ENCODE measurements at regions of chr1 and their contacts with region 1.

Region 1: DNA sequence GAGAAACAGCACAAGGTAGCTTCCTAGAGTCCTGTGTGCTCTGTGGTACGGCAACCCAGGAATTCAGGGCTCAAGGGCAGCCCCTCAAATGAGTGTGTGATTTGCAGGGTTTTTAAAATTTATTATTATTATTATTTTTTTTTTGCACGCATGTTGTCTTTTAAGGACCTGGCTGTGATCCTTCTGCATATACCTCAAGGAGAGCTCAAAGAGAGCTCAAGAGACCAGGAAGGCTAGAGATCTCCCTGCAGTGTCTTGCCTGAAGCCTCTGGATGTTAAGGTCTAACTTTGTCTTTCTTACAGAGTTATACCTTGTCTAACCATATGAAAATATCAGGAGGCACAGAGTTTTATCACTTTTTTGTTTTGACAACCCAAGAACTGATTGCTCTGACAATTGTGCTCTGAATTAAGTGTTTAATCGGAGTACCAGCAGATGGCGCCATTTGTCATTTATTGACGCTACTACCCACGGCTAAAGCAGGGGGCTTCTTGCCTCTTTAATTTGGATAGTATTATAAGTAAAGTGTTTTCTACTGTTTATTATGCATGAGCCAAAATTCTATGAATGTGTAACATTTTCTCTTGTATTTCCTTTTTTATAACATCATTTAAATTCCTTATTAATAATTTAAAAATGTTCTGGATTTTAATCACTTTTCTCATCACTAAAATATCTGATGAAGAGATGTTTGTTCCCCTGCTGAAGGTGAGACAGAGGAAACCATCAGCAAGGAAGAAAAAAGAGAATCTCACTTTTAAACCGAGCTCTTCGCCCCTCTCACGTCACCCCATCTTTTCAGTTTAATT is 35.8 kb upstream of the LMO4 start:
- DNase-seq: peak; percentile 12
- H3K4me3 Mint-ChIP-seq: no peak overlapping the region
- H3K27ac Mint-ChIP-seq: no peak overlapping the region
- H3K4me1 Mint-ChIP-seq: no peaks in the 10 kb centered on the region
- H3K27me3 Mint-ChIP-seq: peaks cover 11% of the 10 kb centered on the region

Region 2: DNA sequence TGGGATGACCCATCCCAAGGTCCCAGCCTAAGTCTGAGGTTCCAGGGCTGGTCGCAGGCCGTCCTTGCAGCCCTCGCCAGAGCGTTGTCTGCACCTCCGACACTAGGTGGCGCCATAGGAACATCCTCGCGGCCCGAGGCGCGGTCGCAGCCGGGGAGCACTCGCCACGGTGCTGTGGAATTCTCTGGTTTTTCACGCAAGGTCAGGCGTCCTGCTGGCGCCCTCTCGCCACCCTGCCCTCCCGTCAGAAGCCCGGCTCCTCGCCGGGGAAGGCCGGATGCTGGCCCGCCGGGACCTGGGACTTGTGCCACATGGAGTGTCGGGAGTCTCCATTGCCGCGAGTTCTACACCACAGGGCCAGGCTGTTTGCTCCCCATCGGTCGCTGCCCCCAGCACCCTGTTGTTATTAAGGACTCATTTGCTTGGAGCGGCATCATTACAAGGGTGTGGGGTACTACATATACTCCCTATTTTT is 161.0 kb before region 1 on chr1:
- intact Hi-C with region 1: loop called (anchors 1 kb)
- DNase-seq: peak; percentile 59
- H3K4me3 Mint-ChIP-seq: peak overlapping the region; percentile 76
- H3K27ac Mint-ChIP-seq: no peak overlapping the region
- H3K4me1 Mint-ChIP-seq: no peaks in the 10 kb centered on the region
- H3K27me3 Mint-ChIP-seq: peaks cover 32% of the 10 kb centered on the region

Region 3: GRCh38 chr1:87953732-87954344 is 660.9 kb after region 1 on chr1:
- intact Hi-C with region 1: loop called (anchors 1 kb)
- DNase-seq: peak; percentile 39
- H3K4me3 Mint-ChIP-seq: no peak overlapping the region
- H3K27ac Mint-ChIP-seq: no peak overlapping the region
- H3K4me1 Mint-ChIP-seq: no peaks in the 10 kb centered on the region
- H3K27me3 Mint-ChIP-seq: peaks cover 14% of the 10 kb centered on the region

Region 4: DNA sequence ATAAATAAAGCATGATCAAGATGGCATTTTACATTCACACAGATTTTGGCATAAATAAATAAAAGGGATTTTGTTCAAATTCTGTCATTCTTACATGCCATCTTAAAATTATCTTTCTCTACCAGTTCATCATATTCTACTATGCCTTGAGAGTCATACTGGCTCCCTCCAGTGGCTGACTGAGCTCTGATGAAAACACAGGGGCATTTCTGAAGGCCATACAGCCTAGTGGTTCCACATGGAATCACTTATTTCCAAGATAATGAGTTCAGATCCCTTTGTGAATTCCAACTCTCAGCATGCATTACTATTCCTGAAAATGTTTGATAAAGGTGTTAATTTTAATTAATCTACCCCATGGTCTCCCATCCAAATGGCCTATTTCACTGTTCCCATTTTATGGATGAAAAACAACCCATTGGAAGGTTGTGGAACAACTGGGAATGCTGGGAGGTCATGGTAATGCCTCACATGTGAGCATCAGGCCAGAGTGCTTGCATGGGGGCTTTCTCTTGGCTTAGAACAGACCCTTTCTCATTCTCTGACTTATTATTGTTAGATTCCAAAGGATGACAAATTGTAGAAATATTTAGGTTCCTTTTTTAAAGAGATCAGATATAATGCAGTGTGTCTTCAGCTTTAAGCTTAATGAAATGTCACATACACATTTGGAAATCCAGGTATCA is 768.7 kb after region 1 on chr1:
- intact Hi-C with region 1: loop called (anchors 1 kb)
- DNase-seq: no peak
- H3K4me3 Mint-ChIP-seq: no peak overlapping the region
- H3K27ac Mint-ChIP-seq: no peak overlapping the region
- H3K4me1 Mint-ChIP-seq: no peaks in the 10 kb centered on the region
- H3K27me3 Mint-ChIP-seq: no peaks in the 10 kb centered on the region

Region 5: GRCh38 chr1:88595355-88596002 is 1302.6 kb after region 1 on chr1:
- intact Hi-C with region 1: loop called (anchors 5 kb)
- DNase-seq: no peak
- H3K4me3 Mint-ChIP-seq: no peak overlapping the region
- H3K27ac Mint-ChIP-seq: no peak overlapping the region
- H3K4me1 Mint-ChIP-seq: no peaks in the 10 kb centered on the region
- H3K27me3 Mint-ChIP-seq: peaks cover under 1% of the 10 kb centered on the region

Measured in activated T-helper 1 cell treated with anti-CD3 and anti-CD28 coated beads, Interleukin-12 subunit alpha, Interleukin-12 subunit beta, Interleukin-2, Interleukin-4 antibody, amounts not matched to agents 30 ng/mL and 10 ng/mL and 1 ng/mL, durations not matched to agents 14 hours and 24 hours and 36 hours (primary cell).